ENCODE measurements at regions of chr1 and their contacts with region 1.

Region 1: GRCh38 chr1:45490626-45491486 is at the start of gene TESK2:
- DNase-seq: peak; percentile 97
- ATAC-seq: peak; percentile 95
- H3K4me3 ChIP-seq: peak within 1 kb of the TSS; percentile 63 to 77
- H3K27ac ChIP-seq: peak within 1 kb of the TSS; percentile 29
- H3K4me1 ChIP-seq: 0 out of 2 replicates have a peak, but pooled peaks cover 3% of the 10 kb centered on the region
- H3K27me3 ChIP-seq: no peaks in the 10 kb centered on the region; the same call in 1 of the 2 replicates
- CTCF ChIP-seq: no peak
- total RNA-seq, gene TESK2: 3.3 TPM

Region 2: GRCh38 chr1:45339789-45340570 is 150.9 kb before region 1 on chr1 and contains the starts of genes MUTYH and TOE1:
- CTCF ChIA-PET with region 1: interaction called, 10 read pairs
- POLR2A ChIA-PET with region 1: no interaction called
- in situ Hi-C with region 1: no loop called
- intact Hi-C with region 1: no loop called
- DNase-seq: no peak
- ATAC-seq: peak; percentile 95
- H3K4me3 ChIP-seq: peak within 1 kb of the TSS; percentile 89 to 90
- H3K27ac ChIP-seq: peak within 1 kb of the TSS; percentile 98
- H3K4me1 ChIP-seq: peaks cover 19% of the 10 kb centered on the region
- H3K27me3 ChIP-seq: no peaks in the 10 kb centered on the region
- CTCF ChIP-seq: no peak
- total RNA-seq, gene MUTYH: 40.8 TPM
- total RNA-seq, gene TOE1: 14.3 TPM

Region 3: DNA sequence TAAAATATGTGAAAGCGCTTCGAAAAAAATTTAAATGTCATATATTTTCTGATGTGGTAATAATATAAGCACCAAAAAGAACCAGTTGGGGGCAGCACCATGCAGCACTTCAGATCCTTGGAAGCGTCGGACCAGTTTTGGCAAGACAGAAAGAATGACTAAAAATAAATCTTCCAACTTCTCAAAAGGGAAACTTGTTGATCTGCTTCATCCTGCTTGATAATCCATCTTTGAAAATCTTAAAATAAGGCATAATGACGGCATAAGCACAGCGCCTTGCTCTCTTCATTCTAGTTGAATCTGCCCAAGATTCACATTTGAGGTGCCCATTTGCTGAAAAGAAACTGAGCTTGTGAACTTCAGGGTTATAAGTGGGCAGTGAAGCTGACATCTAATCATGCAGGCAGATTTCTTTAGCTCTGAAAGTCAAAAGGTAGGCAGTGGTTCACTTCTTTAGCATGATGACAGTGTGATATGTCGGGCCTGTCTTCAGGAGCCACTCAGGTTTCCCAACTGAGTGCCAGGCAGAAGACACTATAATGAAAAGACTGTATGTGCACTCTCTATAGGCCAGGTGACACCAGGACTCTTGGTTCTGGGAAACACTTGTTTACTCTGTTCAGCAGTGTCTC is 130.9 kb before region 1 on chr1:
- CTCF ChIA-PET with region 1: interaction called, 32 read pairs
- POLR2A ChIA-PET with region 1: no interaction called
- in situ Hi-C with region 1: no loop called
- intact Hi-C with region 1: loop called (anchors 1 kb)
- DNase-seq: no peak
- ATAC-seq: peak; percentile 74
- H3K4me3 ChIP-seq: no peak overlapping the region
- H3K27ac ChIP-seq: no peak overlapping the region
- H3K4me1 ChIP-seq: no peaks in the 10 kb centered on the region; the same call in 1 of the 2 replicates
- H3K27me3 ChIP-seq: no peaks in the 10 kb centered on the region
- CTCF ChIP-seq: peak; percentile 81

Region 4: GRCh38 chr1:45550401-45551351 is 59.8 kb after region 1 on chr1 and contains the start of gene AKR1A1:
- CTCF ChIA-PET with region 1: no interaction called
- POLR2A ChIA-PET with region 1: no interaction called
- in situ Hi-C with region 1: no loop called
- intact Hi-C with region 1: no loop called
- DNase-seq: peak; percentile 80
- ATAC-seq: peak; percentile 99
- H3K4me3 ChIP-seq: peak within 1 kb of the TSS; percentile 90 to 93
- H3K27ac ChIP-seq: peak within 1 kb of the TSS; percentile 97
- H3K4me1 ChIP-seq: peaks cover 15% of the 10 kb centered on the region
- H3K27me3 ChIP-seq: no peaks in the 10 kb centered on the region
- CTCF ChIP-seq: no peak
- total RNA-seq, gene AKR1A1: 142 TPM

Measured in Panc1 (cell line).